PC-9 (cell line): ENCODE measurements at regions of chr17 and their contacts with region 1.

Region 1: DNA sequence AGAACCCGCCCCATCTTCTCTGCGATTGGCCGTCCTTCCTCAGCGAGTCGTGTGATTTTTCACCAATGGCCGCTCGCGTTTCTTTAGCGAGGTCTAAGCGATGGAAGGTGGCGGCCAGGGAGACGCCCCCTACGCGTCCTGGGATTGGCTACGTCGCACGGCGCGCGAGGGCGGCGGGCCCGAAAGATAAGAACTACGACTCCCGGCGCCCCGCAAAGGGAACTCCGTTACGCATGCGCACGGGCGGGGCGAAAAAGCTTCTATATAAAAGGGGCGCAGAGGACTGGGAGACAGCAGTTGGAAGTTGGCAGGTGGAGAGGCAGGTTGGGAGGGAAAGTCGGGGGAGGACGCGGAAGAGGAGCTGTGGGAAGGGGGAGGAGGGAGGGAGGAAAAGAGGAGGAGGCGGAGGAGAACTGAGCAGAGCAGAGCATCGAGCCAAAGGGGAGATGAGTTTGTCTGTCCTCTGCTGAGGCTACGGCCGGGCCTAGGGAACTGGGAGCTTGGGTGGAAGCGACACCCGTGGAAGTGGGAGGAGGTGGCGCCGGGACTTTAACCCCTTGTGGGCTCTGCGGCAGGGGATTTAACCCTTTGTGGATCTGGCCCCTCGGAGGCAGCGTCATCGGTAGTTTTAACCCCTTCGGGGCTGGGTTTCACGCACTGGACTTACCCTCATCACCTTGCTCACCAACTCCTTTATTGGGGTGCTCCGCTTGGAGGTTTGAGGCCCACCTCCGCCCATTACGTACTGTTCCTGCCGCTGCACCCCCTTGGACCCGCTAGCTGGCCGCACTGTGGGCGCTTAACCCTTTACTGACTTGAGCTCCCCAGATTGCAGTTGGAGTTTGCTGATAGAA is at the start of gene HEXIM1:
- DNase-seq: peak; percentile 98
- H3K4me3 ChIP-seq: peak within 1 kb of the TSS; percentile 86
- H3K27ac ChIP-seq: peak within 1 kb of the TSS; percentile 92
- H3K4me1 ChIP-seq: peaks cover 27% of the 10 kb centered on the region
- H3K27me3 ChIP-seq: no peaks in the 10 kb centered on the region
- CTCF ChIP-seq: no peak
- total RNA-seq, gene HEXIM1: 49.3 and 64.9 TPM in 2 replicates

Region 2: GRCh38 chr17:43814714-43815113 is 1333.7 kb before region 1 on chr17:
- CTCF ChIA-PET with region 1: no interaction called
- POLR2A ChIA-PET with region 1: no interaction called
- intact Hi-C with region 1: no loop called
- DNase-seq: peak; percentile 7 to 84
- H3K4me3 ChIP-seq: no peak overlapping the region
- H3K27ac ChIP-seq: peak overlapping the region; percentile 81
- H3K4me1 ChIP-seq: peaks cover 27% of the 10 kb centered on the region
- H3K27me3 ChIP-seq: no peaks in the 10 kb centered on the region
- CTCF ChIP-seq: no peak

Region 3: GRCh38 chr17:44672479-44673093 is 475.8 kb before region 1 on chr17:
- CTCF ChIA-PET with region 1: no interaction called
- POLR2A ChIA-PET with region 1: interaction called, 13 read pairs
- intact Hi-C with region 1: no loop called
- DNase-seq: no peak
- H3K4me3 ChIP-seq: no peak overlapping the region
- H3K27ac ChIP-seq: no peak overlapping the region
- H3K4me1 ChIP-seq: no peaks in the 10 kb centered on the region
- H3K27me3 ChIP-seq: no peaks in the 10 kb centered on the region
- CTCF ChIP-seq: peak; percentile 73

Region 4: GRCh38 chr17:45021607-45022287 is 126.7 kb before region 1 on chr17:
- CTCF ChIA-PET with region 1: no interaction called
- POLR2A ChIA-PET with region 1: interaction called, 11 read pairs
- intact Hi-C with region 1: no loop called
- DNase-seq: peak in 1 of 2 experiments; percentile 56
- H3K4me3 ChIP-seq: no peak overlapping the region
- H3K27ac ChIP-seq: no peak overlapping the region
- H3K4me1 ChIP-seq: peaks cover 4% of the 10 kb centered on the region
- H3K27me3 ChIP-seq: 0 out of 2 replicates have a peak, but pooled peaks cover 4% of the 10 kb centered on the region
- CTCF ChIP-seq: peak; percentile 72

Region 5: GRCh38 chr17:45110668-45111611 is 37.5 kb before region 1 on chr17:
- CTCF ChIA-PET with region 1: no interaction called
- POLR2A ChIA-PET with region 1: no interaction called
- intact Hi-C with region 1: no loop called
- DNase-seq: no peak
- H3K4me3 ChIP-seq: no peak overlapping the region
- H3K27ac ChIP-seq: no peak overlapping the region
- H3K4me1 ChIP-seq: no peaks in the 10 kb centered on the region
- H3K27me3 ChIP-seq: no peaks in the 10 kb centered on the region
- CTCF ChIP-seq: no peak

Region 6: GRCh38 chr17:45172454-45173286 is 24.3 kb after region 1 on chr17:
- CTCF ChIA-PET with region 1: interaction called, 32 read pairs
- POLR2A ChIA-PET with region 1: interaction called, 42 read pairs
- intact Hi-C with region 1: loop called (anchors 1 kb)
- DNase-seq: peak; percentile 97
- H3K4me3 ChIP-seq: peak overlapping the region; percentile 60
- H3K27ac ChIP-seq: peak overlapping the region; percentile 95
- H3K4me1 ChIP-seq: peaks cover 93% of the 10 kb centered on the region
- H3K27me3 ChIP-seq: no peaks in the 10 kb centered on the region
- CTCF ChIP-seq: no peak; the same call in 1 of the 2 replicates

Region 7: GRCh38 chr17:45228763-45229539 is 80.5 kb after region 1 on chr17:
- CTCF ChIA-PET with region 1: interaction called, 11 read pairs
- POLR2A ChIA-PET with region 1: interaction called, 5 read pairs
- intact Hi-C with region 1: no loop called
- DNase-seq: peak; percentile 65 to 68
- H3K4me3 ChIP-seq: peak overlapping the region; percentile 3; the same call in 1 of the 2 replicates
- H3K27ac ChIP-seq: peak overlapping the region; percentile 22
- H3K4me1 ChIP-seq: peaks cover 55% of the 10 kb centered on the region
- H3K27me3 ChIP-seq: no peaks in the 10 kb centered on the region
- CTCF ChIP-seq: no peak

Region 8: GRCh38 chr17:45338023-45338781 is 189.8 kb after region 1 on chr17:
- CTCF ChIA-PET with region 1: no interaction called
- POLR2A ChIA-PET with region 1: no interaction called
- intact Hi-C with region 1: no loop called
- DNase-seq: no peak
- H3K4me3 ChIP-seq: no peak overlapping the region
- H3K27ac ChIP-seq: no peak overlapping the region
- H3K4me1 ChIP-seq: peaks cover 22% of the 10 kb centered on the region
- H3K27me3 ChIP-seq: no peaks in the 10 kb centered on the region
- CTCF ChIP-seq: no peak

Region 9: GRCh38 chr17:45353043-45353442 is 204.6 kb after region 1 on chr17:
- CTCF ChIA-PET with region 1: no interaction called
- POLR2A ChIA-PET with region 1: no interaction called
- intact Hi-C with region 1: no loop called
- DNase-seq: no peak
- H3K4me3 ChIP-seq: no peak overlapping the region
- H3K27ac ChIP-seq: no peak overlapping the region
- H3K4me1 ChIP-seq: peaks cover 17% of the 10 kb centered on the region
- H3K27me3 ChIP-seq: no peaks in the 10 kb centered on the region
- CTCF ChIP-seq: no peak

Region 10: GRCh38 chr17:45428050-45428617 is 279.7 kb after region 1 on chr17:
- CTCF ChIA-PET with region 1: interaction called, 4 read pairs
- POLR2A ChIA-PET with region 1: no interaction called
- intact Hi-C with region 1: loop called (anchors 5 kb)
- DNase-seq: peak; percentile 63 to 79
- H3K4me3 ChIP-seq: no peak overlapping the region
- H3K27ac ChIP-seq: no peak overlapping the region
- H3K4me1 ChIP-seq: peaks cover 37% of the 10 kb centered on the region
- H3K27me3 ChIP-seq: no peaks in the 10 kb centered on the region
- CTCF ChIP-seq: peak; percentile 99